Ascending aorta (tissue), 2 donors: ENCODE measurements at regions of chrX and their contacts with region 1.

Region 1: DNA sequence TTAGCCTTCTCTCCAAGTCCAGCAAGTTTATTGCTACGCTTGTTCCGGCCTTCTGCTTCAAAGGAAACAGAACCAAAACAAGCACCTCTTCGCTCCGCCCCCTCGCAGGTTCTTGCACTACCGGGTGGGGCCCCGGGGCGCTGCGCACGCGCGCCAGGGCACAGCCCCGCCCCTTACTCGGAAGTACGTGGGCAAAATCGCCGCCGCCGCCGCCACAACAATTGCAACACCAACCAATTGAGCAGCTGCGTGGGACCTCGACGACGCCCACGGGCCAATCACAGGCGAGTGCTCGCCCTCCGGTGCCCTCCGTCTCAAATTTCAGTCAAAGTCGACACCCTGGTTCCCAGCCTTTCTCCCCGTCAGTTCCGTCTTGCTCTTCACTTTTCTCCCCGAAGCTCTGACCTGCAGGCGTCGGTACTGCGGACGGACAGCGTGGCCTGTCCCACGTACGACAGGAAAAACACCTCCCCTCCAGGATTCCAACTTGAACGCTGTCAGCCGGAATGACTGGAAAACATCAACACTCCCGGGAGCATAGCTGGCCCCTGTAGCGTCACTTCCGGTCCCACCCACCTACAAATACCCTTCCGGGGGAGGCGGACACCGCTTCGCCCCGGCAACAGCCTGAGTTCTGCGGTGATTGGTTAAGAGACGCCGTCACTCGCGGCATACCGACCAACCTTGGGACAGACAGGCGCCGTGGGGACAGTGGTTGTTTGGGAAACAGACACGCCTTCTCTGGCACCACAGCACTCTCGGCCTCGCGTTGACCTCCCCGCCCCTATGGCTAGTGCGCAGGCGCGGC is 624 bp upstream of the OTUD5 start:
- DNase-seq: peak; percentile 90 to 98
- H3K4me3 ChIP-seq: peak overlapping the region; percentile 58 to 86
- H3K27ac ChIP-seq: peak overlapping the region; percentile 90 to 92
- H3K4me1 ChIP-seq: no peaks in the 10 kb centered on the region
- H3K27me3 ChIP-seq: no peaks in the 10 kb centered on the region
- CTCF ChIP-seq: no peak

Region 2: GRCh38 chrX:48897621-48898306 is 60.3 kb before region 1 on chrX and contains the starts of genes PQBP1 and TIMM17B:
- intact Hi-C with region 1: loop called (anchors 2 kb)
- DNase-seq: peak; percentile 72 to 93
- H3K4me3 ChIP-seq: peak within 1 kb of the TSS; percentile 60 to 69
- H3K27ac ChIP-seq: peak within 1 kb of the TSS; percentile 94 to 97
- H3K4me1 ChIP-seq: peaks cover 3 to 9% of the 10 kb centered on the region in 2 donors
- H3K27me3 ChIP-seq: no peaks in the 10 kb centered on the region
- CTCF ChIP-seq: no peak
- total RNA-seq, gene PQBP1: 14.8 TPM
- total RNA-seq, gene TIMM17B: 15.3 TPM

Region 3: DNA sequence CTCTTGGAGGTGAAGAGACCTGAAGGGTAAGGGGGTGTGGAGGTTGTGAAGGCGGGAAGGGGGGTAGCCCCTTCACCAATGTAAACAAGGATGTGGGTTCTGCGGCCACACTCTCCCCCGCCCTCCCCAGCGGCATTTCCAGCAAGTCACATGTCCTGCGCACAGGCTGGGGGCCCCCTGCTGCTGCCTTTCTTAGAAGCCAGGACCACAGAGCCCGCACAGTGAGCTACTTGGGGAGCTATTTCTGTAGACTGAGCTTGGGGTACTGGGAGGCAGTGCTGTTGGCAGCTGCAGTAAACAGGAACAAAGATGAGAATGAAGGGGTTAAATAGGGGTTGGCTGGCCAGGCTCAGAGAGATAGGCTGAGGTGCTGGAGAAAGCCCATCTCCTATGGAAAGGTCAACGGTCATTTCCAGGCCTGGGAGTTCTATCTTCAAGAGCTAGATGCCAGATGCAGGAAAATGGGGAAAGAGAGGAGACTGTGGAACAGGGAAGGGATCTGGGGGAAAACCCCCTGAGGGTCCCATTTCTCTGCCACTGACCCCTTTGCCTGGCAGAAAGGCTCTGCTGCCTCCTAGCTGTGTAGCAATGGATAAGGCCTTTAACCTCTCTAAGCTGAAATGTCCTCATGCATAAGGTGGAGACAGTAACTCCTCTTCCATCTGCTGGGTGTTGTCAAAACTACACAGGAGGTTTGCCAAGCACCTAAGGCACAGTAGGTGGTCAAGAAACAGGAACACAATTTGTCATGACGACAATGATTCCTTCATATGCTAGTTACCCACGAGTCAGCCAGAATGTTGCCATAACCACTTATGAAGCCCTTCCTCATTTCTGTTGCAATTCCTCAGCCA is 20.8 kb before region 1 on chrX:
- intact Hi-C with region 1: no loop called
- DNase-seq: peak; percentile 32 to 72
- H3K4me3 ChIP-seq: no peak overlapping the region
- H3K27ac ChIP-seq: no peak overlapping the region
- H3K4me1 ChIP-seq: no peaks in the 10 kb centered on the region
- H3K27me3 ChIP-seq: no peaks in the 10 kb centered on the region
- CTCF ChIP-seq: no peak

Region 4: DNA sequence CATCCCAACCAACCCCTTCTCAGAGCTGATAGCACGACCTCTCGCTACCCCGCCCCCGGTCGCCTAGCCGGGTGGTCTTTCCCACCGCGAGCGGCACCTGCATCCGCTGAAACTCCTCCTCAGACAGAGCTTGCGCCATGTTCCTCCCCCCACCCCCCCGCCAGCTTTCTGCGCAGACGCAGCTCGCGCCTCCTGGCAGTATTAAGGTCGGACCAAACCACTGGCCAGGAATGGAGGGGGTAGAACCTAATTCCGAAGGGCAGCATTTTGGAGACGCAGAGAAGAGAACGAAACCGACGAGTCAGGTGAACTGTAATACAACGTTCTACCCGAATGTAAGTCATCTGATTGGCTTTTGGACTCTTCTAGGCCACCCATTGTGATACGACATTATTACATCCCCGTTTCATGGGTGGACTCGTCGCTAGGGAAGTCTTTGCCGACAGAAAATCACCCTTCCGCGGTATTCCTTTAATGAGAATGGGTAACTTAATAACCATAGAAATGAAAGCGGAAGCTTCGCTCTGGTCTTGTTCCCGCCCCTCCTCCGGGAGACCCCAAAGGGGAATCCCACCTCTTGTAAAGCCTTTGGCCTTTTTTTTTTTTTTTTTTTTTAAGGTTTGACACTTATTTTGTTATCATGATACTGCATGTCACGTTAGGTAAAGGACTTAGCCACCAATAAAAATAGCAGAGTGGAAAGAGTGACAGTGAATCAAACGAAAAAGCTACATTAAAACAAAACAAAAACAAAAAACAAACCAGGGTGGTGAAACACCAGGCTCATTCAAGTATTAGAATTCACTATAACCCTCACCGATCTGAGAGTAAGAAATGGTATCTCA is 44.3 kb after region 1 on chrX and contains the start of gene GRIPAP1:
- intact Hi-C with region 1: loop called (anchors 2 kb)
- DNase-seq: peak; percentile 12 to 83
- H3K4me3 ChIP-seq: peak within 1 kb of the TSS; percentile 59 to 66
- H3K27ac ChIP-seq: peak within 1 kb of the TSS; percentile 65 to 78
- H3K4me1 ChIP-seq: peaks cover 0 to 4% of the 10 kb centered on the region in 2 donors
- H3K27me3 ChIP-seq: no peaks in the 10 kb centered on the region
- CTCF ChIP-seq: no peak
- total RNA-seq, gene GRIPAP1: 15.0 TPM

Region 5: DNA sequence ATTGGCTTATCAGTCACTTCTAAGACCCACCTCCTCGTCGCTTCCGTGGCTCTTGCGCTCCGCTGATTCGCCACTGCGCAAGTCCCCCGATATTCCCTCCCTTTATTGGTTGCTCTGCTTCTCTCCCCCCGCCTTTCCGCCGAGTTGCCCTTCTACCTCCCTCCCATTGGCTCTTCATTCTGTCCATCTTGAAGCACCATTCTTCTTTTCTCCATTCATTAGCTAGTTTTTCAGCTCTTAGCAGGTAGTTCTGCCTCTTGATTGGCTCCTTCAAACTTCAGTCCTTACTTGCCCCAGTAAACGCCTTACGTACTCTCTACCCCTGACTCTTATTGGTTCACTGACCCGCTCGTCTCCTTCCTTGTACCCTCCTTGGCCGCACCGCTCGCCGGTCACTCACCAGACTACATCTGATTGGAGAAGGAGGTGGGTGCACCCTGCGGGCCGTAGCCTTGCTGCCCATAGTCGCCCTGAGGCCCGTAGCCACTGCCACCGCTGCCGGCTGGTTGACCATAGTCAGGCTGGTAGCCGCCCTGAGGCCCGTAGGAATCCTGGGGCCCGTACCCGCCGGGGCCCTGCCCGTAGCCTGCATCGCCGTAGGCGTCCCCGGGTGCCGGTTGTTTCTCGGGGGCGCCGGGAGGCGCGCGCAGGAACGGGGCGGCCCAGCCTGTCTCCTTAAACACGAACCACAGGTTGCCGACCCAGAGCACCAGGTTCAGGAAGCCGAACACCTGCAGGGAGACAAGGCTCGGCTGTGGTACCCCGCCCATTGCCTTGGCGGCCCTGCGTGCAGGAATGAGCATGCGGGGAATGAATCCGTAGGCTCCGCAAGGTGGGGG is 233.2 kb after region 1 on chrX:
- intact Hi-C with region 1: loop called (anchors 1 kb)
- DNase-seq: peak; percentile 85 to 96
- H3K4me3 ChIP-seq: peak overlapping the region; percentile 57 to 78
- H3K27ac ChIP-seq: peak overlapping the region; percentile 81
- H3K4me1 ChIP-seq: no peaks in the 10 kb centered on the region
- H3K27me3 ChIP-seq: no peaks in the 10 kb centered on the region
- CTCF ChIP-seq: no peak